Endothelial cell of umbilical vein (primary cell): ENCODE measurements at regions of chrX and their contacts with region 1.

Region 1: DNA sequence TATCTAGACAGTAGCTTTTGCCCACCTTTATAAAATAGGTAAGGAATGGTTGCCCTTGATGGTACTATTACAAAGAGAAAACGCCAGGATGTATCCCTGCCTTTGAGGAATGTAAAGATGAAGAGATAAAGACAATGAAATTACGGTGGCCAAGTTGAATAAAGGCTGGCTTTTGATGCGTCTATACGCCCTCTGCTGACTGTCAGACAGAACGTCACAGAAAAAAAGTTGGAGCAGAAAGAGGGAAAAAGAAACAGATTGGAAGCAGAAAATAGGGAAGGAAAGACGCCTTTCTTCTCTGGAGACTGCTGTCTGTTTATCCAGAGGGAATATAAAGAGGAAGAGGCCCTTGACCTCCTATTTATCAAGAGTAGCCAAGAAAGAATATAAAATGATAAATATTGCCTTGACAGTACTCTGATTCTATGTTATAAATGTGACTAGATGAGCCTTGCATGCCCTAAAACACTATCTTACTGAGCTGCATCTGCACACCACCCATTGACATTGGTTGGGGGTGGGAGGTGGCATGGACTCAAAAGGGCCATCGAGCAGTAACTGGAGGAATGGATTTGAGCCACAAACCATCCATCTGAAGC is 30.6 kb downstream of the PCDH19 start:
- DNase-seq: peak; percentile 37
- H3K4me3 ChIP-seq: no peak overlapping the region
- H3K27ac ChIP-seq: no peak overlapping the region
- H3K4me1 ChIP-seq: no peaks in the 10 kb centered on the region
- H3K27me3 ChIP-seq: no peaks in the 10 kb centered on the region
- CTCF ChIP-seq: peak; percentile 16 to 47
- POLR2A ChIP-seq: no peak

Region 2: DNA sequence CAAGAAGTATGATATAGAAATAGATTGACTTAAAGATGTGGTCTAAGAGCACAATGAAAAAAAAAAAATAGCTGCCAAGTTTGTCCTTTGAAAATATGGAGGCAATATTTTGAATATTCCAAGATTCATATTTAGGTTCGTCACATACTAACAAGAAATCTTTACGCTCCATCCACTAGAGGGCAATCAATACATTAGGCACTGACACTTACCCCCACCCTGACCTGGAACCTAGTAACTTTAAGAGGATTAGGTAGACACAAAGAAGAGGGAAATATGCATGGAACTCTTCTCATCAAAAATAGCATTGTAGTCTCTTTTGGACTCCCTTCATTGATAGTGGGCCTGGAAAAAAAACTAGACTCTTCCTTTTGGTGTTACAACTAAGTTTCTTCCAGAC is 1077.5 kb before region 1 on chrX:
- CTCF ChIA-PET with region 1: no interaction called
- POLR2A ChIA-PET with region 1: no interaction called
- dilution Hi-C with region 1: no loop called
- intact Hi-C with region 1: loop called (anchors 10 kb)
- DNase-seq: no peak
- H3K4me3 ChIP-seq: no peak overlapping the region
- H3K27ac ChIP-seq: no peak overlapping the region
- H3K4me1 ChIP-seq: no peaks in the 10 kb centered on the region
- H3K27me3 ChIP-seq: no peaks in the 10 kb centered on the region
- CTCF ChIP-seq: no peak
- POLR2A ChIP-seq: no peak

Region 3: GRCh38 chrX:99795495-99795894 is 584.0 kb before region 1 on chrX:
- CTCF ChIA-PET with region 1: no interaction called
- POLR2A ChIA-PET with region 1: no interaction called
- dilution Hi-C with region 1: no loop called
- intact Hi-C with region 1: loop called (anchors 5 kb)
- DNase-seq: no peak
- H3K4me3 ChIP-seq: no peak overlapping the region
- H3K27ac ChIP-seq: no peak overlapping the region
- H3K4me1 ChIP-seq: no peaks in the 10 kb centered on the region
- H3K27me3 ChIP-seq: no peaks in the 10 kb centered on the region
- CTCF ChIP-seq: peak in 1 of 2 donors; percentile 13
- POLR2A ChIP-seq: no peak

Region 4: GRCh38 chrX:100413229-100413628 is 33.7 kb after region 1 on chrX:
- CTCF ChIA-PET with region 1: interaction called, 19 read pairs
- POLR2A ChIA-PET with region 1: no interaction called
- dilution Hi-C with region 1: no loop called
- intact Hi-C with region 1: no loop called
- DNase-seq: peak; percentile 61
- H3K4me3 ChIP-seq: no peak overlapping the region
- H3K27ac ChIP-seq: no peak overlapping the region
- H3K4me1 ChIP-seq: peaks cover 13% of the 10 kb centered on the region
- H3K27me3 ChIP-seq: peaks cover 17 to 34% of the 10 kb centered on the region in 2 experiments
- CTCF ChIP-seq: peak in 1 of 2 donors; percentile 26
- POLR2A ChIP-seq: no peak

Region 5: GRCh38 chrX:100717363-100717762 is 337.9 kb after region 1 on chrX:
- CTCF ChIA-PET with region 1: no interaction called
- POLR2A ChIA-PET with region 1: no interaction called
- dilution Hi-C with region 1: no loop called
- intact Hi-C with region 1: no loop called
- DNase-seq: no peak
- H3K4me3 ChIP-seq: no peak overlapping the region
- H3K27ac ChIP-seq: no peak overlapping the region
- H3K4me1 ChIP-seq: no peaks in the 10 kb centered on the region
- H3K27me3 ChIP-seq: no peaks in the 10 kb centered on the region
- CTCF ChIP-seq: no peak
- POLR2A ChIP-seq: no peak

Region 6: GRCh38 chrX:100911726-100912125 is 532.2 kb after region 1 on chrX:
- CTCF ChIA-PET with region 1: no interaction called
- POLR2A ChIA-PET with region 1: no interaction called
- dilution Hi-C with region 1: no loop called
- intact Hi-C with region 1: no loop called
- DNase-seq: peak; percentile 5
- H3K4me3 ChIP-seq: no peak overlapping the region
- H3K27ac ChIP-seq: no peak overlapping the region
- H3K4me1 ChIP-seq: peaks cover 13% of the 10 kb centered on the region
- H3K27me3 ChIP-seq: no peaks in the 10 kb centered on the region
- CTCF ChIP-seq: no peak
- POLR2A ChIP-seq: no peak